ENCODE measurements at regions of chr11 and their contacts with region 1.

Region 1: GRCh38 chr11:65436412-65437032 is 13.9 kb downstream of the NEAT1 start:
- DNase-seq: peak; percentile 39
- H3K4me3 Mint-ChIP-seq: no peak overlapping the region
- H3K27ac Mint-ChIP-seq: peak overlapping the region; percentile 60
- H3K4me1 Mint-ChIP-seq: peaks cover 83% of the 10 kb centered on the region
- H3K27me3 Mint-ChIP-seq: no peaks in the 10 kb centered on the region

Region 2: GRCh38 chr11:64935359-64936081 is 501.0 kb before region 1 on chr11 and contains the start of gene GPHA2:
- CTCF ChIA-PET with region 1: no interaction called
- intact Hi-C with region 1: no loop called
- DNase-seq: no peak
- H3K4me3 Mint-ChIP-seq: no peak within 1 kb of the TSS
- H3K27ac Mint-ChIP-seq: no peak within 1 kb of the TSS
- H3K4me1 Mint-ChIP-seq: no peaks in the 10 kb centered on the region
- H3K27me3 Mint-ChIP-seq: no peaks in the 10 kb centered on the region
- total RNA-seq, gene GPHA2: not detected

Region 3: DNA sequence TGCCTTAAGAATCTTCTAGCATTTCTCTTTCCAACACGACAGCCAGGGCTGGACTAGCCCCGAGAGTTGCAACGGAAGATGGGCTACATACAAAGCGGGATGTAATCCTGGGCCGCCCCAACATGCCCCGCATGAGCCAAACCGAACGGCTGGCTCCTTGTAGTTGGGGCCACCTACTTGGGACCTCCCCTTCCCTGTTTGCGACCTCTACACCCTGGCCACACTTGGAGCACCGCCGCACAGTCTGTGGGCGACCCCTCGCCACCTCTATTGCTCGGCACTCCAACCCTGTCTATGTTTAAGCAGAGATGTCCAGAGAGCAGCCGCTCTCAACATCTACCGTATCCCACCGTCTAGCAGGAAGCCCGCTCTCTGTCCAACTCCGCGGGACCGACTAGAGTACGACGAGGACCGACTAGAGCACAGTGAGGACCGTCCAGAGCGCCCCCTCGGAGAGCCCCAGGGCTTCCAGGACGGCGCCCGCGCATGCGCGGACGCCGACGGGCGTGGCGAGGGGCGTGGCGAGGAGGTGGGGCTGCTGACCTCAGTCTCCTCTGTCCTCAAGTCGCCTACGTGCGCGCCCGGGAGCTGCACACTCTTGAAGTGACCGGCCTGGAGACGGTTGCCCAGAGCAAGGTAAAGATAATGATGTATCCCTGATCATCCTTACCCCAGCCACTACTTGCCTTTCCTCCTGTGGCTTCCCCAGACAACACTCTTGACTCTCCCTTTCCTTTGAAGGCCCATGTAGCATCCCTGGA is 18.4 kb after region 1 on chr11:
- CTCF ChIA-PET with region 1: interaction called, 3 read pairs
- intact Hi-C with region 1: loop called (anchors 2 kb)
- DNase-seq: peak; percentile 86
- H3K4me3 Mint-ChIP-seq: peak overlapping the region; percentile 90
- H3K27ac Mint-ChIP-seq: peak overlapping the region; percentile 82
- H3K4me1 Mint-ChIP-seq: peaks cover 37% of the 10 kb centered on the region
- H3K27me3 Mint-ChIP-seq: no peaks in the 10 kb centered on the region

Region 4: DNA sequence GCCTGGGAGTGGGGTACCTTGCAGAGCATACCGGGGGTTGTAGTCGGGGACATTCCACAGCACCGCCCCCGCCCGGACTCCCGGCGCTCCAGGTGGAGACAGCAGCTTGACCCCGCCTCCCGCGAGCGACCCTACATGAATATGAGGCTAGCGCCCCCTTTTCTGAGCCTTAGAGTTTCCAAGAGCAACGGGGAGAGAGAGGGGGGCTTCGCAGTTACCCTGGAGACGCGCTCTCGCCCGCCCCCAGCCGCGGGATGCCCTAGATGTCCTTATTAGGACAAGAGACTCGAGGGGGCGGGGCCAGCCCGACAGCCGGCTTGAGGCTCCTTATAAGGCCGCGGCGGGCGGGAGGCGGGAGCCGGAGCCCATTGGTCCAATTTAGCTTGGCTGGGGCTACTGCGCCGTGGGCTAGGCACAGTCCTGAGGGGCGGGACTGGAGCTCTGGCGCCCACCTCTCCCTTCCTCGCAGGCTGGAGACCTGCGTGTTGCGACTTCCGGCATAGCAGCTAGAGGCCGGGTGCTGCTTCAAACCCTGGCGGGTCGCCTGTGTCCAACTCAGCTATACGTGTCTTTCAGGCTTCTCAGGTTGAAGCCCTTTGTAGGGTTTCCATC is 422.8 kb after region 1 on chr11:
- CTCF ChIA-PET with region 1: no interaction called
- intact Hi-C with region 1: no loop called
- DNase-seq: peak; percentile 99
- H3K4me3 Mint-ChIP-seq: peak overlapping the region; percentile 97
- H3K27ac Mint-ChIP-seq: peak overlapping the region; percentile 100
- H3K4me1 Mint-ChIP-seq: peaks cover 41% of the 10 kb centered on the region
- H3K27me3 Mint-ChIP-seq: no peaks in the 10 kb centered on the region

Measured in activated naive CD4-positive, alpha-beta T cell treated with anti-CD3 and anti-CD28 coated beads for 36 hours (primary cell).